ENCODE measurements at regions of chr18 and their contacts with region 1.

Region 1: DNA sequence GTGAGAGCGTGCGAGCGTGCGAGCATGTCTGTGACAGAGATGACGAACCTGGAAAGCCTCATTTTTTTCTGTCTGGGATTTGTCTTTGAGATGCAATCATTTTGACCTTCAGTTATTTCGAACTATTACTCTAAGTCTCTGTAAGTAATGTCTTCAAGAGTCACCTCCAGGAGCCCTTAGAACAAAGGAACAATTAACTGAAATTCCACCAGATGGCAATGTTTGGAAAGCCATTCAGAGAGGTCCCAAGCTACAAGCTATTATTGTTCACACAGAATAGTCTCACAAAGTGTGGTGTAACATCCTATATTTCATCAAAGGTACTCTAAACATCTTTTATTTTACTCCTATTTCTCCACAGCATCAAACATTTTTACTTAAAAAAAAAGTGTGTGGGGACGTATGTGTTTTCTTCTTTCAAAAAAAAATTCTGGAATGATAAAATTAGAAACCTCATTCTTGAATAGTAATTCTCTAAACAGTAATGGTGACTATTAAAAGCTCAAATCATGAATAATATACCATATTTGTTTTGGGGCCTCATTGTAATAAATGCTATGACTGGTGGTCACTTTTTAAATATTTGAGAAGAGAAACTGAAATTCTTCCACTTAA is 35.1 kb upstream of the MAPRE2 start:
- DNase-seq: no peak
- ATAC-seq: peak; percentile 87 to 93 (median 90)
- H3K4me3 ChIP-seq: no peak overlapping the region
- H3K27ac ChIP-seq: no peak overlapping the region
- H3K4me1 ChIP-seq: peaks cover 0 to 4% (median 2%) of the 10 kb centered on the region in 4 donors
- H3K27me3 ChIP-seq: no peaks in the 10 kb centered on the region
- CTCF ChIP-seq: peak; percentile 57 to 74 (median 64)
- POLR2A ChIP-seq: no peak

Region 2: DNA sequence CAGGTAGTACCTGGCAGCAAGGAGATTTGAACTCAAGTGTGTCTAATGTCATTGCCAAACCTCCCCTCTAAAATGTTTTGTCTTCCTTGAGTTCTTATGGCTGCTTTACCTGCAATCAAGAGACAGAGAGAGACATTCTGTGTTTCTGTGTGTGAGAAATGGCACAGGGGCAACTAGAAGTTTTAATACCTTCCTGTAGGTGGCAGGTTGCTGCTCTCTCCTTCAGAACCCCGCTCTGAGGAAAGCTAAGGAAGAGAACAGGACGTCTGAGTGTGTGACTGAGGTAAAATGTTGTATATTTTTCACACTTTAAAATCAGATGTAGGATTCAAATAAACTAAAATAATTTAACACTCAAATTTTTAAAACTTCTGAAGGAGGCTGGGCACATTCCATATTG is 276.8 kb before region 1 on chr18:
- intact Hi-C with region 1: no loop called
- DNase-seq: no peak
- ATAC-seq: peak; percentile 47 to 67 (median 56)
- H3K4me3 ChIP-seq: no peak overlapping the region
- H3K27ac ChIP-seq: no peak overlapping the region
- H3K4me1 ChIP-seq: no peaks in the 10 kb centered on the region
- H3K27me3 ChIP-seq: no peaks in the 10 kb centered on the region
- CTCF ChIP-seq: peak; percentile 19 to 47 (median 32)
- POLR2A ChIP-seq: no peak

Region 3: DNA sequence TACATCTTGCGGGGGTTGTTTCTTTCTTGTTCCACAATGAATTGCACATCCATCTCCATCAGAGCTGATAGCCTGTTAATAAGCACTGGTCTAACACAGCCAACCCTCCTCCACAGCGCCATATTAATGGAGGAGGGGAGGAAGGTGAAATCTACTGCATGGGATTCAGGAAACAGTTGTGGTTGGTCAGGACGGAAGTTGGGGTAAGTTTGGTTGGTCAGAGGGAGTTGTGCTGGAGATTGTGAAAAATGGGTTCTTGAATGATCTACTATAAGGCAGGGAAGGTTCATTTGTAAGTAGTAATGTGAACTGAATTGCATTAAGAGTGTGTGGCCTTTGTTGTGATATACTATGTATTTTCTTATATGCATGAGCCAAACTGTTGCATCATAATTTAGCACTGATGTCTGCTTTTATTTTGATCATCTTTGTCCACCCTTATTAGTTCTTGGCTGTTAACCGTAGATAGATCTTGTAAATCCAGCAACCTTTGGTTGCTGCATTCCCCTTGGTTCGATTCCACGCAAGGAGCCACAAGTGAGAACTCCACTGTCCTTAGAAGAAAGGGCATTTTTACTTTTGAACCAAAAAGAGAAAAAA is 115.5 kb before region 1 on chr18:
- intact Hi-C with region 1: no loop called
- DNase-seq: no peak
- ATAC-seq: no peak
- H3K4me3 ChIP-seq: no peak overlapping the region
- H3K27ac ChIP-seq: no peak overlapping the region
- H3K4me1 ChIP-seq: no peaks in the 10 kb centered on the region
- H3K27me3 ChIP-seq: no peaks in the 10 kb centered on the region
- CTCF ChIP-seq: no peak
- POLR2A ChIP-seq: no peak

Region 4: GRCh38 chr18:35063875-35064690 is 58.0 kb after region 1 on chr18:
- intact Hi-C with region 1: no loop called
- DNase-seq: no peak
- ATAC-seq: no peak
- H3K4me3 ChIP-seq: no peak overlapping the region
- H3K27ac ChIP-seq: no peak overlapping the region
- H3K4me1 ChIP-seq: peaks cover 0 to 35% (median 14%) of the 10 kb centered on the region in 4 donors
- H3K27me3 ChIP-seq: no peaks in the 10 kb centered on the region
- CTCF ChIP-seq: no peak
- POLR2A ChIP-seq: no peak

Region 5: GRCh38 chr18:35132021-35132902 is 126.2 kb after region 1 on chr18:
- intact Hi-C with region 1: loop called in 1 of 2 experiments (anchors 10 kb)
- DNase-seq: no peak
- ATAC-seq: peak; percentile 62 to 82 (median 77)
- H3K4me3 ChIP-seq: no peak overlapping the region
- H3K27ac ChIP-seq: no peak overlapping the region
- H3K4me1 ChIP-seq: peaks cover 0 to 7% (median 1%) of the 10 kb centered on the region in 4 donors
- H3K27me3 ChIP-seq: no peaks in the 10 kb centered on the region
- CTCF ChIP-seq: no peak
- POLR2A ChIP-seq: no peak

Region 6: DNA sequence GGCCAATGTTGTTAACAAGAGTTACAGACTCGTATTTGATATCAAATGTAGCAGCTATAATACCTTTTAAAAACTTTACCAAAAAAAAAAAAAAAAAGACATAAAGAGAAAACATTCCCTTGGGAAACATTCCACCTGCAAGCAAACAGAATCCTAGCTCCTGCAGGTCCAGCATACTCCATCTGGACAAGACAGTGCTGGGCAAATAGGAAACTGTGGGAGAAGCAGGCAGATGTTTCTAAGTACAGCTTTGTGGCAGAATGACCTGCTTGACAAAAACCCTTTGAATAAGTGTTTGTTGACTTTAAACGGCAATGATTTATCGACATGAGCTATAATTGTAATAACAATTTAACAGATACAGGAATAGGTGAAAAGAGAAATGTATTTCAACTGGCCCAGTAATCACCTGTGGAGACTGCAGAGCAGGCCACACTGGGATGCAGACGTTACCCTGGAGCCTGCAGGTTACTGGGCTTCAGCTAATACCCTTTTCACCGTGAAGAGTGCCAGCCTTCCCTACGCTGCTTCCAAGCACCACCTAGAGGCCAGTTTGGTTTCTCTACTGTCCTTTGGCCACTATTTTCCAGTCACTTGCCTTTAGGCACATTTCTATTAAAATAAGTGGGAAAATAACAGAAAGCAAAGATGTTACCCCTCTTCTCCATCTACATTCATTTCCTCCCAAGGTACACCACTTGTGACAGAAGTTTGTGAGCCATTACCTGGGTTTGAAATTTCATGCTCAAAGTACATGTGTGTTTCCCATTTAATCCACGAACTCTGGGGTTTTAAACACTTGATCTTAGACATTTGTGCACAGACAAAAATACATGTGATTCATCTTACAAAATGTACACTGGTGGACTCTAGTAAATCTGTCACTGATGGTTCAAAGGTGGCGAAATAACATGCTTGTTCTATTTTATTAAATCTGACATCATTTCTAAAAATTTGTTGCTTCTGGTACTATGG is 137.8 kb after region 1 on chr18:
- intact Hi-C with region 1: loop called (anchors 10 kb)
- DNase-seq: peak in 2 of 3 donors; percentile 45 to 74
- ATAC-seq: peak; percentile 100
- H3K4me3 ChIP-seq: no peak overlapping the region
- H3K27ac ChIP-seq: no peak overlapping the region
- H3K4me1 ChIP-seq: no peaks in the 10 kb centered on the region
- H3K27me3 ChIP-seq: no peaks in the 10 kb centered on the region
- CTCF ChIP-seq: peak; percentile 70 to 84 (median 80)
- POLR2A ChIP-seq: no peak

Measured in right lobe of liver (tissue), 6 donors.